Thyroid gland (tissue), 4 donors: ENCODE measurements at regions of chr11 and their contacts with region 1.

Region 1: GRCh38 chr11:128831174-128832120 is 35.6 kb downstream of the KCNJ1 start:
- DNase-seq: peak; percentile 79 to 84
- H3K4me3 ChIP-seq: no peak overlapping the region
- H3K27ac ChIP-seq: peak overlapping the region in 1 of 3 donors; percentile 11
- H3K4me1 ChIP-seq: peaks cover 0 to 3% of the 10 kb centered on the region in 2 donors
- H3K27me3 ChIP-seq: no peaks in the 10 kb centered on the region
- CTCF ChIP-seq: peak; percentile 72 to 89 (median 78)
- POLR2A ChIP-seq: no peak

Region 2: DNA sequence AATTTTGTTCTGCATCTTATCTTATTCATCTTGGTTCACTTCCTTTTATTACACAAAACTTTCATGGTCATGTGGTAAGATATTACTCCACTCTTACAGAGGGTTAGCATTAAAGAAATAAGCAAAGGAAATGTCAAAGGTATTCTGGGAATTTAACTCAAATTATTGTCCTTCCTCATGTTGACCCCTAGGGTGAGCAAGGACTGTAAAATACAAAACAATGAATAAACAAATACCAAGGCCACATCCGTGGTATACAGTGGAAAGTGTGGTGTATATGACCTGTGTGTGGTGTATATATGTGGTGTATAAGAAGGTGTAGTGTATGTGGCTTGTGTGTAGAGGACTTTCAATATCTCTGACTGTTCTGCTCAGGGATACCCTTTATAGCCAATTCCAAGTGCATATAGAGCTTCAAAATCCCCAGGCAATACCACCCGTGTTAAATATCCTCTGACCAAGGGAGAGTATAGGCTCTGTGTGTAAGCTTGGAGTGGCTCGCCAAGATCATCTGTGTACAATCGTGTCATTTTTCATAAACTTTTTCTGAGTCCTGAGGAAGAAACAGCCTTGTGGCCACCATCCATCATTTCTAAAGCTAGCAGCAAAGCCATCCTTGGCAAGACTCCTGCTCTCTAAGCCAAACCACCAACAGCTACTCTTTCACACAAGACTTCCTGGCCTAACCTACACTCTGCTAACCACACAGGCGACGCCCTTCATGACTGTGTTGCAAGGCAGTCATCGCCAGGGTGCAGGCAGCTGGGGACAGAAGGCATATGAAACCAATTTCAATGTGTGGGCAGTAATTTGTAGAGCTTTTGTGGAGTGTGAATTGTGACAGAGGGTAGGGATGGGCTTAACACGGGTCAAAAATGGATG is 792.1 kb before region 1 on chr11:
- intact Hi-C with region 1: loop called (anchors 5 kb)
- DNase-seq: peak; percentile 33 to 60
- H3K4me3 ChIP-seq: no peak overlapping the region
- H3K27ac ChIP-seq: no peak overlapping the region
- H3K4me1 ChIP-seq: peaks cover 14 to 23% of the 10 kb centered on the region in 2 donors
- H3K27me3 ChIP-seq: no peaks in the 10 kb centered on the region
- CTCF ChIP-seq: no peak
- POLR2A ChIP-seq: no peak

Region 3: DNA sequence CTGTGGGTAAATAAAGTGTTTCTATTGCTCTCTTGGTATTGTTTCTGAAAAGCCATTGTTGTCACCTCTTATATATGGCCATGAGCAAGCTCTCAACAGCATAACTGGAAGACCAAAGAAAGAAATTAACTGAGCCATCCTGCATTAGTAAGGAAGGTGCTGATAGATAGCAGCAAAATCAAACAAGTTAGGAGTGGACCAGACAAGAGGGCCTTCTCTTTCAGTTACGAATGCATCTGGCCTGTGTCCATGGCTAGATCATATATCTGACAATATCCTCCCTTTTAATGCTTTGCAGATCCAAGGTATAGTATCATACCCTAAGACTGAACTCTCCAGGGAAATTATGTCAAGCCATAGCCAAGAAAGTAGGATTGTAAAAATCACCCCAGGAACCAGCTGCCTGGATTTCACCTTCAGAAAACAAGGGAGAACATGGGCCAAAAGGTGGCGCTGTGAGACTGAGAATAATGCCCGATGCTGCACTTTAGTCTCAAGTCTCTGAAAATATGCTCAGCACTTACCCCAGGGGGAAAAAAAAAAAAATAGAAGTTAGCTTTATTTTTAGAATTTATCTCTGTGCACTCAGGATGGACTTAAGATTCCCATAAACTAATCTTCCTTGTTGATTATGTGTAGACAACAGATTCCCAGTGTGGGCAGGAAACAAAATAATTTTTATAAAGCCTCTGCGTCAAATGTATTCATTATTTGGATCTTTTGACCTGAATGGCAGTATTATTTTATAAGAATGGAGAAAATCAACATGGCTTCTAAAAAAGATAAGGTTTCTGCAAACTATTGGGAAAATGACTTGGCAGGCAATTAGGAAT is 659.2 kb before region 1 on chr11:
- intact Hi-C with region 1: loop called (anchors 5 kb)
- DNase-seq: peak; percentile 83 to 89
- H3K4me3 ChIP-seq: no peak overlapping the region
- H3K27ac ChIP-seq: no peak overlapping the region
- H3K4me1 ChIP-seq: no peaks in the 10 kb centered on the region
- H3K27me3 ChIP-seq: no peaks in the 10 kb centered on the region
- CTCF ChIP-seq: peak; percentile 58 to 89 (median 74)
- POLR2A ChIP-seq: no peak

Region 4: DNA sequence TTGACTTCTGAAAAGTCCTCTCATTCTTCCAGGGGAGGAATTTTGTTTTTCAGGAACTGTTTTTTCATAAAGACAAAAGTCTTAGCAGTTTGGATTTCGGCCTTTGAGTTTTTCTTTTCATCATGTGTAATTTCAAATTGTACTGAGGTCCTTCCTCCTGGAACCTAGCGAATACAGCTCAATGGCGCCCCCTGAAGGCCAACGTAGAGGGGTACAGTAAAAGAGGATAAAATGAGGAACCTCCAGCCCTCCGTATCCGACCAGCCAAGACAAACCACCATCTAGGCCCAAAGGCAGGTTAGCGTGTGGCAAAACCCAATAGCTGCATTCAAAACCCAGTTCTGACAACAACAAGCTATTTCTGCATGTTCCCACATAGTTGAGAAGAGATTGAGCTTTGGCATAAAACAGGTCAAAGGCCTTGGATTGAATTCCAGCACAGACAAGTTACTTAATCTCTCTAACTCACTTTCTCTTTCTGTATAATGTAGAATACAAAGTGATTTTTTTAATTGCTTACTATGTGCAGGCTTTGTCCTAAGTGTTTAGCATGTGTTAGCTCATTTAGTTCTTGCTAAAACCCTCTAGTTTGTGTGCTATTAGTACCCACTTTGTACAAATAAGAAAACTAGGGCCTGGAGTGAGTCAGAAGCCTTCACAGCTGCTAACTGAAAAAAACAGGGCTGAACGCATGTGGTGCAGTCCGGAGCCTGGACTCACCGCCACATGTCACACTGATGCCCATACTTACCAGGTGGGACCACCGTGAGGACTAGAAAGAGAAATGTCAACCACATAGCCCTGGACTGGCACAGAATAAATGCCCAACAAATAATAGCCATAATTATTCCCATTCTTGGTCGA is 200.8 kb before region 1 on chr11:
- intact Hi-C with region 1: loop called (anchors 10 kb)
- DNase-seq: peak; percentile 82 to 90
- H3K4me3 ChIP-seq: no peak overlapping the region
- H3K27ac ChIP-seq: peak overlapping the region in 1 of 3 donors; percentile 10
- H3K4me1 ChIP-seq: peaks cover 0 to 10% of the 10 kb centered on the region in 2 donors
- H3K27me3 ChIP-seq: no peaks in the 10 kb centered on the region
- CTCF ChIP-seq: peak; percentile 72 to 93 (median 85)
- POLR2A ChIP-seq: no peak